ENCODE measurements at regions of chr11 and their contacts with region 1.

Region 1: DNA sequence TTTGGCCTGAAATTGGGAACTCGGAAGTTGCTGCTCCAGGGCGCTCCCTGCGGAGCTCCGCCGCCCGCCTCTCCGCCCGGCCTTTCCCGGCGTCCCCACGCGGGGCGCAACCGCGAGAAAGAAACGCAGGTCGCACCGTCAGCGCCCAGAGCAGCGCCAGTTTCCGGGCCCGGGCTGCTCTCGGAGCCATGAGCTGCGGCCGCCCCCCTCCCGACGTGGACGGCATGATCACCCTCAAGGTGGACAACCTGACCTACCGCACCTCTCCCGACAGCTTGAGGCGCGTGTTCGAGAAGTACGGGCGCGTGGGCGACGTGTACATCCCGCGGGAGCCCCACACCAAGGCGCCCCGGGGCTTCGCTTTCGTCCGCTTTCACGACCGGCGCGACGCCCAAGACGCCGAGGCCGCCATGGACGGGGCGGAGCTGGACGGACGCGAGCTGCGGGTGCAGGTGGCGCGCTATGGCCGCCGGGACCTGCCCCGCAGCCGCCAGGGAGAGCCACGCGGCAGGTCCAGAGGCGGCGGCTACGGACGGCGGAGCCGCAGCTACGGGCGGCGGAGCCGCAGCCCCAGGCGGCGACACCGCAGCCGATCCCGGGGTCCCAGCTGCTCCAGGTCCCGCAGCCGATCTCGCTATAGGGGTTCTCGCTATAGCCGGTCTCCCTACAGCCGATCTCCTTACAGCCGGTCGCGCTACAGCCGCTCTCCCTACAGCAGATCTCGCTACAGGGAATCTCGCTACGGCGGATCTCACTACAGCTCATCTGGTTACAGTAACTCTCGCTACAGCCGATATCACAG is 521 bp downstream of the SRSF8 start:
- DNase-seq: peak; percentile 71

Region 2: DNA sequence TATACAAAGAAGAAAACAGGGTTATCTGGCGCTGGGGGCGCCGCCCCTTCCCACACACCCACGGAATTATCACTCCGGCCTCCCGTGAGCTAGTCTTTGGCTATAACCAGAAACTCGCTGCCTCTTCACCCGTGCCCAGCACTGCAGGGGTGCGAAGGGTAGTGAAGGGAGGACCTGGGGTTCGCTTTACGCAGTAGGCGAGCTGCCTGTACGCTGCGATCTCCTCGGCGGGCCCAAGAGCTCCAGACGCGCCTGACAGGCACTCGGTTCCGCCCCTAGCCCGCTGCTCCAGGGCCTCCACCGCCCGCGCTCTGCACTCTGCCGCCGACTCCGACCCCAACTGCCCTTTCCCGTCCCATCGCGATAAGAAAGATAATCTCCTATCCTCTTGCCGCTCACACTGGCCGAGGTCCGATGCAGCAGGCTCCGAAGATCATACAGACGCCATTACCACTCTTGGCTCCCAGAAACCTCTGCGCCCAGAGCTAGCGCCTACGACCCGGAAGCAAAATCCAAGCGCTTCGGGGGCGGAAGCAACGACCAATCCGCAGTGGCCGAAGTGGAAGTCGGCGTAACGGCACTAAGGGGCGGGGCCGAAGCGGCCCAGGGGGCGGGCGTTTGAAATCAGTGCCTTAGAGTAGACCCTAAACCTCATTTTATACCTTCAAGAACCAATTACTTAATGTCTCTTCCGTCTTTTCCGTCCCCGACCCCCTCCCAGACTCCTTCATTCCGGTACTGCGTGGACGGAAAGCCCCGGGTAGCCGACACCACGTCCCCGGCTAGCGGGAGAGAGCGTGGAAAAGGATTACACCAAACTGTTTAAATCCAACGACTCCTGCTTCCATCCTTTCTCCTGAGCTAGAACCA is 93.9 kb before region 1 on chr11 and contains the starts of genes CWC15 and KDM4D:
- CTCF ChIA-PET with region 1: no interaction called
- POLR2A ChIA-PET with region 1: interaction called, 35 read pairs
- DNase-seq: peak; percentile 96

Region 3: GRCh38 chr11:95035316-95035715 is 31.9 kb before region 1 on chr11:
- CTCF ChIA-PET with region 1: no interaction called
- POLR2A ChIA-PET with region 1: no interaction called
- DNase-seq: no peak

Region 4: GRCh38 chr11:95055283-95055897 is 11.8 kb before region 1 on chr11:
- CTCF ChIA-PET with region 1: interaction called, 5 read pairs
- POLR2A ChIA-PET with region 1: interaction called, 26 read pairs
- DNase-seq: no peak

Region 5: DNA sequence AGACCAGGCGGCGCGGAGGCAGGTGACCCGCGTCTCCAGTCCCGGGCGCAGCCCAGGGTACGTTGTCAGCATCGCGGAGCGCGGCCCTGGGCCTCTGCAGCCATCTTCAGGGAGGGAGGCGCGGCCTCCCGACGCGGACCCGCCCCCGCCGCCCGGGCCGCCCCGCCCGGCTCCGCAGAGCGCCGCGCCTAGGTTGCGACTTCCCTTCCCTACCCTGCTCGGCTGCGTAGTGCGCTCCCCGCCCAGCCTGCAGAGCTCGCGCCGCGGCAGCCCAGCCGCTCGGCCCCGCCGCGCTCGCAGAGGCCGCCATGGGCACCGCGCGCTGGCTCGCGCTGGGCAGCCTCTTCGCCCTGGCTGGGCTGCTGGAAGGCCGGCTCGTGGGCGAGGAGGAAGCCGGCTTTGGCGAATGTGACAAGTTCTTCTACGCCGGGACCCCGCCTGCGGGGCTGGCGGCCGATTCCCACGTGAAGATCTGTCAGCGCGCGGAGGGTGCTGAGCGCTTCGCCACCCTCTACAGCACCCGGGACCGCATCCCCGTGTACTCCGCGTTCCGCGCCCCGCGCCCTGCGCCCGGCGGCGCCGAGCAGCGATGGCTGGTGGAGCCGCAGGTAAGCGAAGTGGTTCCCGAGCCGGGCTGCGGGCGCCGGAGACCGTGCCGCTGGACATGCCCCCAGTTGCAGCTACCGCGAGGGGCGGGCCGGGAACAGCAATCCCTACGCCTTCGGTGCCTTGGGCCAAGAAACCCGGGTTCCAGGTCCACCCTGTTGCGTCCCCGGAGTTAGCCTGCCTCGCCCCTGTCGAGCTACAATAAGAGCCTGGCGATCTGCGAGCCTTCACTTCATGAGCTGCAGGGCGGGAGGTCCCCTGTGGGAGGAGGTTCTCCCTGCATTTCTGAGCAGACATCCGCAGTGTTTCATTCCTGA is 22.6 kb after region 1 on chr11 and contains the start of gene ENDOD1:
- CTCF ChIA-PET with region 1: interaction called, 6 read pairs
- POLR2A ChIA-PET with region 1: interaction called, 30 read pairs
- DNase-seq: peak; percentile 86

Region 6: DNA sequence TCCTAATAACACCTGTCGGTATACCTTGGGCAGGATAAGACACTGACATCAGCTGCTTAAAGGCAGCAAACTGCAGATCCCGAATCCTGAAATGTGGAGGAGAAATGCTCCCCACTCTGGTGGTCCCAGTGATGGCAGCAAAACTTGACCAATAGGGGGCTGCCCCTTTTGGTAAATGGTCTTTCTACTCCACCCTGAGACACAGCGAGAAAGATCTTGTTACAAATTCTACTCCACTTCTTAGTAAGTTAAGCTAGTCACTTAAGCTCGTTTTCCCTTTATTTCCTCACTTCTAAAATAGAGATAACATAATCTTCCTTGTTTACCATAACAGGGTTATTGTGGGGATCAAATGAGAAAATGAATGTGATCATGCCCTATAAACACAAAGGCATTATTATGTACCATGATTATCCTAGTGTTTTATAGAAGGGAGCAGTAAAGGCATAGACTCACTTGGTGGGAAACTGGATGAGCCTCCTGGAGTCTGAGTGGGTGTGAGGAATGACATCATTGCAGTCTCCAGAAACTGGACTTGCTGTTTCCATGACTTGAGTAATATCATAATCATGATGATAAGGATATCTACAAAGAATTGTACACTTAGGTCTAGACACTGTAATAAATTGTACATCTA is 73.3 kb after region 1 on chr11:
- CTCF ChIA-PET with region 1: interaction called, 6 read pairs
- POLR2A ChIA-PET with region 1: interaction called, 19 read pairs
- DNase-seq: no peak

Region 7: DNA sequence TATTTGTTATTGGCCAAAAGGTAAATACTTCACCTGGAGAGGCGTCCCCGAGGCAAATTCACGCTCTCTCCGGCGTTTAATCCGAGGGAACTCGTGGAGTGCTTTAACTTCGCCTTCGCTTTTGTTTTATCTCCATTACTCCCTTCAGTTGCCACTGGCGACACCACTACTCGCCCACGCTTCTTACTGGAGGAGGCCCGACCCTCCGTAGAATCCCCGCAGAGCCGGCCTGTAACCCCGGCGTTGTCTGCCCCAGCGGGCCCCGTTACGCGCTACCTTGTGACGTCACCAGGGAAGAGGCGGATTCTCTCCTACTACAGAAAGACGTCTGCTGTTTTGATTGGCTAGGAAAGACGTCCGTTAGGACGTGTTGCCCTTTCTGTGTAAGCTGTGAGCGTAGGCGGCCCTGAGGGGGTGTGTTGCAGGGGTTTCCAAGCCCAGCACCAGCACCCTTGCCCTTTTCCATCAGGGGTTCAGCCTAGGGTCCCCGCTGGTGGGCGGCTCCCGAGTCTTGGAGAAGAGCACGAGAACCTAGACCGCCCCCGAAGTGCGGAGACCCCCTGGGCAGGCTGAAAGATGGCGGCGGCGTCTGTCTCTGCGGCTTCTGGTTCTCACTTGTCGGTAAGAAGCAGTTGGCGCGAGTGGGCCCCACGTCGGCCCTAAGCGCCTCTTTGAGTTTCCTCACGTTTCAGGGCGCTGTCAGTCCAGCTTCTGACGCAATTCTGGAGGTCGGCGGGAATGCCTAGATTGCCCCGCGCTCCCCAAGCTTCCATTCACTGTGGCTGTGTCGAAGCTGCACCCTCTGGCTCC is 723.1 kb after region 1 on chr11 and contains the start of gene CEP57:
- CTCF ChIA-PET with region 1: no interaction called
- POLR2A ChIA-PET with region 1: interaction called, 12 read pairs
- DNase-seq: peak; percentile 90